ENCODE measurements at regions of chr3 and their contacts with region 1.

Region 1: GRCh38 chr3:32781210-32781968 is 36.4 kb upstream of the TRIM71 start:
- DNase-seq: no peak
- H3K4me3 ChIP-seq: peak overlapping the region; percentile 70
- H3K27ac ChIP-seq: no peak overlapping the region
- H3K27me3 ChIP-seq: no peaks in the 10 kb centered on the region
- CTCF ChIP-seq: peak; percentile 81

Region 2: GRCh38 chr3:32614956-32615355 is 166.4 kb before region 1 on chr3:
- CTCF ChIA-PET with region 1: no interaction called
- POLR2A ChIA-PET with region 1: no interaction called
- DNase-seq: peak; percentile 58
- H3K4me3 ChIP-seq: no peak overlapping the region
- H3K27ac ChIP-seq: peak overlapping the region; percentile 52
- H3K27me3 ChIP-seq: no peaks in the 10 kb centered on the region
- CTCF ChIP-seq: no peak

Region 3: DNA sequence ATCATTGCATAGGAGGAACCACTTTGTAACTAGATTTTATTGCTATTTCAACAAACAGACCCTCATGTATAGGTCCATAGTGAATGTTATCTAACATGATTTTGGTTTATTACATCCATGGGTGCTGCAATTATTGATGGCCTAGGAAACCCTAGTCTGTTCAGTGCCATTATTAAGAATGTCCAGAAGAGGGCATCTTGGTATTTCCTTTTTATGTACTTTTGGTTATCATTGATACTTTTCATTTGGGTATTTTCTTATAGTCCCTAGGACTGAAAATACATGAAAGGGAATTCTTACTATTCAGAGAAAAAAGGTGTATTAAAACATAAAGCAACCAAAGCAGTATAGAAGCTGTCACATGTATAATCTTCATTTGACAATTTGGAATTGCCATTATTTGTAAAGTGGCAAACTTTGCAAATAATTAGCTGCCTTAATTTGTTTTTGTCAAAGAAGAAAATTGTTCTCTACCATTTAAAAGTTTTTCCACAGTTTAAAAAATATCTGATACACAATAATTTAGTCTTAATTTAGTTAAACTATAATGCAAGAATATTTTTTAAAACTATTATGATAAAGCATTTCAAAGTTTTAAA is 47.7 kb before region 1 on chr3:
- CTCF ChIA-PET with region 1: interaction called, 19 read pairs
- POLR2A ChIA-PET with region 1: no interaction called
- DNase-seq: no peak
- H3K4me3 ChIP-seq: no peak overlapping the region
- H3K27ac ChIP-seq: no peak overlapping the region
- H3K27me3 ChIP-seq: no peaks in the 10 kb centered on the region
- CTCF ChIP-seq: peak; percentile 66

Region 4: DNA sequence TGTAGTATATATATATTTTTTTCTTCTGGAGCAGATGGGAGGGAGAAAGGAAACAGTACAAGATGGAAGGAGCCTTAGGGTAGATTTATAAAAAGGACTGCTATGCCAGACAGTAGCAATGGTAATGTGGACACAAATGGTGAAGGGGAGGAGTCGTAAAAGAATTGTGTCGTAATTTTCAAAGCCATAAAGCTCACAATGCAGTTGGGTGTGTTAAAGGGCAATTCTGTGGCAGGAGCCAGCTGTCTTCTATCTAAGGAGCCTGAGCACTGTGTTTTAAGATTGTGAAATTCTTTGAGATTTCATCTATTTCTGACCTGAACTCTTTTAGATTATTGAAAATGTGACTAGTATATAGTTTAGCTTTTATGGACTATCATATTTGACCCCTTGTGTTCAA is 37.5 kb before region 1 on chr3:
- CTCF ChIA-PET with region 1: interaction called, 10 read pairs
- POLR2A ChIA-PET with region 1: no interaction called
- DNase-seq: peak; percentile 15
- H3K4me3 ChIP-seq: no peak overlapping the region
- H3K27ac ChIP-seq: no peak overlapping the region
- H3K27me3 ChIP-seq: no peaks in the 10 kb centered on the region
- CTCF ChIP-seq: no peak

Region 5: GRCh38 chr3:32764481-32764880 is 16.9 kb before region 1 on chr3:
- CTCF ChIA-PET with region 1: interaction called, 29 read pairs
- POLR2A ChIA-PET with region 1: no interaction called
- DNase-seq: no peak
- H3K4me3 ChIP-seq: no peak overlapping the region
- H3K27ac ChIP-seq: no peak overlapping the region
- H3K27me3 ChIP-seq: no peaks in the 10 kb centered on the region
- CTCF ChIP-seq: no peak

Measured in AG04450 (cell line).